BJ (cell line): ENCODE measurements at regions of chr18 and their contacts with region 1.

Region 1: DNA sequence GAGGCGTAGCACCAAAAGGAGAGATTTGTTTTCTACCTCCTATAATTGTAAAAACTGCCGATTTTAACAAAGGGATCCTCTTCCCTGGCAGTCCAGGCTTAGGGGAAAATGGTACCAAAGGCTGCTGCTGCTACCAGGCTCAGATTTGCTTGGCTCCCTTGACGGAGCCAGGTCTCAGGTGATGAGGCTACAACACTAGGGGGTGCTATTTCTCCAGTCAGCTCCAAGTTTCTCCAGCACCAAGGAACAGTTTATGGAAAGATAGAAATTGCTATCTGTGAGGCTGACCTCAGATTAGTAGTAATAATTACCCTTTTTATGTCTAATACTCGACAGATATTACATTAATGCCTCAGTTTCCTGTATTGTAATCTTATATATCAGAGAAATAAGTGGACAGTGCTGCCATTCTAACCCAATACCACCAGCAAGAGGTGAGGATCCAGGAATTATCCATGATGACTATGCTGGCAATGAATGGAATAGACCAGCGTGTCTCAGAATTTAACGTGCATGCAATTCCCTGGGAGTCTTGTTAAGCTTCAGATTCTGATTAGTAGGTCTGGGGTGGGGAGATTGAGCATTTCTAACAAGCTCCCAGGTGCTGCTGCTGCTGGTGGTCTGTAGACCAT is 111.3 kb downstream of the ESCO1 start:
- DNase-seq: no peak
- H3K4me3 ChIP-seq: no peak overlapping the region
- H3K27me3 ChIP-seq: no peaks in the 10 kb centered on the region
- CTCF ChIP-seq: peak; percentile 79

Region 2: GRCh38 chr18:21004726-21005125 is 484.5 kb before region 1 on chr18:
- CTCF ChIA-PET with region 1: no interaction called
- POLR2A ChIA-PET with region 1: no interaction called
- DNase-seq: peak; percentile 64
- H3K4me3 ChIP-seq: no peak overlapping the region
- H3K27me3 ChIP-seq: no peaks in the 10 kb centered on the region
- CTCF ChIP-seq: no peak

Region 3: DNA sequence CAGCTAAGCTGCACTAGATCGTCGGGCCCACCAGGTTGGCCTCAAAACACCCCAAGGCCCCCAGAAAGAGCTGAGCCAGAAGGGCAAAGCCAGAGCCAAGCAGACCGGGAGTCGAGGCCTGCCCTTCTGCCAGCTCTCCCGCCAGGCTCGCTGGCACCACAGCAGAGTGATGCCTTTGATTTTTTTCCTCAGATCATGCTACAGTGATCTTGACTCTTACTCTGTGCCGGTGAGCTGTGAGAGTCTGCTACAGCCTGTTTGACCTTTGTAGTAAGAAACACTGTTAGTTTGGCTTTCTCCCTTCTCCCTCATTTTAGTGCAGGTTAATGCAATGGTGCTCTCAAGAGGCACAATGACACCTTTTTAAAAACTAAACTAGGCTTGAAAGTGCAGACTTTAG is 13.4 kb after region 1 on chr18:
- CTCF ChIA-PET with region 1: interaction called, 26 read pairs
- POLR2A ChIA-PET with region 1: no interaction called
- DNase-seq: no peak
- H3K4me3 ChIP-seq: no peak overlapping the region
- H3K27me3 ChIP-seq: no peaks in the 10 kb centered on the region
- CTCF ChIP-seq: no peak

Region 4: GRCh38 chr18:21600526-21601410 is 111.5 kb after region 1 on chr18 and contains the start of gene ESCO1:
- CTCF ChIA-PET with region 1: interaction called, 14 read pairs
- POLR2A ChIA-PET with region 1: no interaction called
- DNase-seq: peak; percentile 90
- H3K4me3 ChIP-seq: peak within 1 kb of the TSS; percentile 94
- H3K27me3 ChIP-seq: no peaks in the 10 kb centered on the region
- CTCF ChIP-seq: peak; percentile 84
- polyA plus RNA-seq, gene ESCO1: 2.0 and 5.0 TPM in 2 replicates

Region 5: DNA sequence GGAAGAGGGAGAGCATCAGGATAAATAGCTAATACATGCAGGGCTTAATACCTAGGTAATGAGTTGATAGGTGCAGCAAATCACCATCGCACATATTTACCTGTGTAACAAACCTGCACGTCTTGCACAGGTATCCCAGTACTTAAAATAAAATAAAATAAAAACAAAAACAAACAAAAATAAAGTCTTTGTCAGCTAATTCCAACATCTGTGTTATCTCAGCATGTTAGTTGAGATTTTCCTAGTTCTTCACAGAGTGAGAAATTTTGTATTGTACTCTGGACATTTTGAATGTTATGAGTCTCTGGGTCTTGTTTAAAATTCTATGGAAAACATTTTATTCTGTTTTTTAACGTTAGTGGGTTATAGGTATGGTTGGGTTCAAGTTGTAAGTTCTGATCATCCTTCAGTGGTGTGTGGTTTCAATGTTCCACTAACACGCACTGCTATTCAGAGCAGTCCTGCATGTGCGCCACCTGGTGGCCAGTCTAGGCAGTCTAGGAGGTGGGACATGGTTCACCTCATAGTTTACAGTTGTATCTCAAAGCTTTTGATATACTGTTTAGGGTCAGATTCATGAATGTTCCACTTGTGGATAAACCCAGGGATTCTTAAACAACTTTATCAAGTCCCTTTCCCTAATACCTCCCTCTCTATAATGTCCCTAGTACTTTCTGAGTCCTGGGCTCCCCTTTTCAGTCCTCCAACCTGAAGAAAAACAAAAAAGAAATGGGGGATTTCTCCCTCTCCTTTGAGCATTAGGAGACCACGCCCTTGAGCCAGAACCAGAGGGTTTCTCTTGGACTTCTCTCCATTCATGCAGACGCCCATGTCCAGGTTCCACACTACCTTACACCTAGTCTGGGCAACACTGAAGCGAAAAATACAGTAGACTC is 466.8 kb after region 1 on chr18:
- CTCF ChIA-PET with region 1: interaction called, 19 read pairs
- POLR2A ChIA-PET with region 1: no interaction called
- DNase-seq: no peak
- H3K4me3 ChIP-seq: no peak overlapping the region
- H3K27me3 ChIP-seq: no peaks in the 10 kb centered on the region; the same call in 1 of the 2 replicates
- CTCF ChIP-seq: peak; percentile 97